ENCODE measurements at regions of chr11 and their contacts with region 1.

Region 1: DNA sequence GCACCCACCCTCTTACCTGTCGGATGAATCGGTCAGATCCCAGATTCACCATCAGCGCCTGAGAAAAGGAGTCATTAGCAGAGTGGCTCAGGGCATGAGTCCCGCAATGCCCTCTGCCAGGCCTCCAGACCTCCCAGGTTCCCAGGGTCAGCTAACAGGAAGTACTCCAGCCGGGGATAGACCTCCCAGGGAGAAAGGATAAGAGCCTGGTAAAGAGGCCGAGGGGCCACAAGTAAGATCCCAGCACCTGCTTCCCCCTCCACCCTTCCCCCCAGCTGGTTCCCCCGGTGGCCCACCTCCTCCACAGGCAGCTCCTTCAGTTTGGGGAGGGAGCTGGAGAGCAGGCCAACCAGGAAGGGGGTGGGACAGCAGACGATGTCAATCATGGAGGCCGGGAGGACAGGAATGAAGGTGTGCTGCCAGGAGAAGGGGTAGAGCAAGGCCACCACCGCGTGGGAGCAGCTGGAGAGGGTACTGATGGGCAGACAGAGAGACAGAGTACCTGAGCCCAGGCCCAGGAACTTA is 16.4 kb downstream of the RPL27A start:
- DNase-seq: no peak
- ATAC-seq: no peak
- H3K4me3 ChIP-seq: no peak overlapping the region
- H3K27ac ChIP-seq: no peak overlapping the region
- H3K4me1 ChIP-seq: peaks cover 11% of the 10 kb centered on the region
- H3K27me3 ChIP-seq: no peaks in the 10 kb centered on the region
- CTCF ChIP-seq: no peak

Region 2: GRCh38 chr11:8744423-8744822 is 45.4 kb after region 1 on chr11:
- CTCF ChIA-PET with region 1: no interaction called
- POLR2A ChIA-PET with region 1: no interaction called
- intact Hi-C with region 1: no loop called
- DNase-seq: peak; percentile 82
- ATAC-seq: peak; percentile 96
- H3K4me3 ChIP-seq: no peak overlapping the region
- H3K27ac ChIP-seq: 0 out of 2 replicates have a peak overlapping the region, but pooled peaks have one; percentile 18
- H3K4me1 ChIP-seq: peaks cover 10% of the 10 kb centered on the region
- H3K27me3 ChIP-seq: no peaks in the 10 kb centered on the region
- CTCF ChIP-seq: no peak

Region 3: DNA sequence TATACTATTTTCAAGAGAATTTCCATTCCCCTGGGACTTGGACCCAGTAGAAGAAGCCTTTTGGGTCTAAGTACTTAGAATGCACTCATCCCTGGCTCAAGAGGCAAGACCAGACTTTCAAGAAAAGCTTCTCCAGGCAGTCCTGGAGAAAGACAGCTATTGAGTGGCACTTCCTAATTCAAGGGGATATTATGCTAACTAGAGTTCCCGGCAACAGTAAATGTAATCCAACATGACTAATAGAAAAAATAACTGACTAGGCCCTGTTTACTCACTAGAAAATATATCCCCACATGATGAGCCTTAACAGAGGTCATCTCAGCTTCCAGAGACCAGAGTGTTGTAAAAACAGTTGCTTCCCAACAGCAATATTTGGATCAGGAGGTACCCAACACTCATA is 164.9 kb after region 1 on chr11:
- CTCF ChIA-PET with region 1: no interaction called
- POLR2A ChIA-PET with region 1: interaction called, 11 read pairs
- intact Hi-C with region 1: no loop called
- DNase-seq: peak; percentile 57
- ATAC-seq: peak; percentile 94
- H3K4me3 ChIP-seq: no peak overlapping the region
- H3K27ac ChIP-seq: no peak overlapping the region
- H3K4me1 ChIP-seq: peaks cover 10% of the 10 kb centered on the region
- H3K27me3 ChIP-seq: no peaks in the 10 kb centered on the region
- CTCF ChIP-seq: no peak